Activated CD8-positive, alpha-beta T cell treated with anti-CD3 and anti-CD28 coated beads for 36 hours (primary cell): ENCODE measurements at regions of chr1 and their contacts with region 1.

Region 1: DNA sequence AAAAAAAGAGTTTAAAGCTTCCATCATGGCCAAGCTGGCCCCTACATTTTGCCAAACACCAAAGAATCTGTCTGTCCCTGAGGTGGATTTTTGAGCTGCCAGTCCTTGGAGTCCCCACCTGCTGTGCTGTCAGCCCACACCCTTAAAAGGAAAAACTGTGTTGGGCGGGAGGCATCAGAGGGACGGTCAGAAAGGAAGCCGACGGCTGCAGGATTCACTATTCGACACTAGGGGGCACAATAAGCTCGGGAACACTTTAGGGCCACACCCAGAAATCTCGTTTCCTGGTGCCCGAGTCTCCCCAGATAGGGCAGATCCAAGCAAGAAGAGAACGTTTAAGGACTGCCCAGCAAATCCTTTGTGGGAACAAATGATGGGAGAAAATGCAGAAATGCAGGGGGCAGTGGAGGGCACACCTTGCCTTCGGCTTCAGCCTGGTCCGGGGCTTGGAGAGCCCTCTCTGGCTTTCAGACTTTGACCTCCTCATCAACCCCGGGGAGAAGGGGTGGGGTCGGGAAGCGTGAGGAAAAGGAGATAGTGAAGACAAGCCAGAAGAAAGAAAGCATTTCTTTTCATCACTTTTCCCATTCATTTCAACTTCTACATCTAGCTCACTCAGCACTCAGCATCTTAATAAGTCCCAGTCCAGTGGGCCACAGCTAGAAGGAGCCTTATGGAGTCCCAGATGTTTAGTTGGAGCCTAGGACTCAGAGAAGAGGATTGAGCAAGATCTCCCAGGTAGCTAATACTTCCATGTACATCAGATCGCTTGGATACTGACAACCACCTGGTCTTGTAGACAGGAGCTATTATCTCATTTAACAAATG is 5.0 kb upstream of the CTTNBP2NL start:
- DNase-seq: peak; percentile 88
- ATAC-seq: peak; percentile 91
- H3K4me3 Mint-ChIP-seq: peak overlapping the region; percentile 48
- H3K27ac Mint-ChIP-seq: no peak overlapping the region
- H3K4me1 Mint-ChIP-seq: peaks cover 18% of the 10 kb centered on the region
- H3K27me3 Mint-ChIP-seq: peaks cover 32% of the 10 kb centered on the region
- CTCF ChIP-seq: peak; percentile 86

Region 2: DNA sequence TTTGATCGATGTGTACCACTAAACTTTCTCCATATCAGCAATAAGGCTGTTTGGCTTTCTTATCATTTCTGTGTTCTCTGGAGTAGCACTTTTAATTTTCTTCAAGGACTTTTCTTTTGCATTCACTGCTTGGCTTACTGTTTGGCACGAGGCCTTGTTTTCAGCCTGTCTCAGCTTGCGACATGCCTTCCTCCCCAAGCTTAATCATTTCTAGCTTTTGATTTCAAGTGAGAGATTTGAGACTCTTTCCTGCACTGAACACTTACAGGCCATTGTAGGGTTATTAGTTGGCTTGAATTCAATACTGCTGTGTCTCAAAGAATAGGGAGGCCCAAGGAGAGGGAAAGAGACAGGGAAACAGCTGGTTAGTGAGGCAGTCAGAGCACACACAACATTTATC is 281.0 kb before region 1 on chr1:
- CTCF ChIA-PET with region 1: no interaction called
- POLR2A ChIA-PET with region 1: no interaction called
- intact Hi-C with region 1: no loop called
- DNase-seq: no peak
- ATAC-seq: no peak
- H3K4me3 Mint-ChIP-seq: no peak overlapping the region
- H3K27ac Mint-ChIP-seq: no peak overlapping the region
- H3K4me1 Mint-ChIP-seq: peaks cover 4% of the 10 kb centered on the region
- H3K27me3 Mint-ChIP-seq: peaks cover 13% of the 10 kb centered on the region
- CTCF ChIP-seq: no peak

Region 3: GRCh38 chr1:112466078-112466660 is 75.2 kb after region 1 on chr1:
- CTCF ChIA-PET with region 1: interaction called, 122 read pairs
- POLR2A ChIA-PET with region 1: interaction called, 3 read pairs
- intact Hi-C with region 1: loop called (anchors 2 kb)
- DNase-seq: peak; percentile 92
- ATAC-seq: peak; percentile 98
- H3K4me3 Mint-ChIP-seq: peak overlapping the region; percentile 71
- H3K27ac Mint-ChIP-seq: peak overlapping the region; percentile 32
- H3K4me1 Mint-ChIP-seq: peaks cover 9% of the 10 kb centered on the region
- H3K27me3 Mint-ChIP-seq: peaks cover 35% of the 10 kb centered on the region
- CTCF ChIP-seq: peak; percentile 86

Region 4: GRCh38 chr1:112501810-112502641 is 111.0 kb after region 1 on chr1:
- CTCF ChIA-PET with region 1: interaction called, 11 read pairs
- POLR2A ChIA-PET with region 1: interaction called, 5 read pairs
- intact Hi-C with region 1: no loop called
- DNase-seq: peak; percentile 64
- ATAC-seq: peak; percentile 66
- H3K4me3 Mint-ChIP-seq: peak overlapping the region; percentile 45
- H3K27ac Mint-ChIP-seq: no peak overlapping the region
- H3K4me1 Mint-ChIP-seq: peaks cover 8% of the 10 kb centered on the region
- H3K27me3 Mint-ChIP-seq: peaks cover 50% of the 10 kb centered on the region
- CTCF ChIP-seq: peak; percentile 64

Region 5: DNA sequence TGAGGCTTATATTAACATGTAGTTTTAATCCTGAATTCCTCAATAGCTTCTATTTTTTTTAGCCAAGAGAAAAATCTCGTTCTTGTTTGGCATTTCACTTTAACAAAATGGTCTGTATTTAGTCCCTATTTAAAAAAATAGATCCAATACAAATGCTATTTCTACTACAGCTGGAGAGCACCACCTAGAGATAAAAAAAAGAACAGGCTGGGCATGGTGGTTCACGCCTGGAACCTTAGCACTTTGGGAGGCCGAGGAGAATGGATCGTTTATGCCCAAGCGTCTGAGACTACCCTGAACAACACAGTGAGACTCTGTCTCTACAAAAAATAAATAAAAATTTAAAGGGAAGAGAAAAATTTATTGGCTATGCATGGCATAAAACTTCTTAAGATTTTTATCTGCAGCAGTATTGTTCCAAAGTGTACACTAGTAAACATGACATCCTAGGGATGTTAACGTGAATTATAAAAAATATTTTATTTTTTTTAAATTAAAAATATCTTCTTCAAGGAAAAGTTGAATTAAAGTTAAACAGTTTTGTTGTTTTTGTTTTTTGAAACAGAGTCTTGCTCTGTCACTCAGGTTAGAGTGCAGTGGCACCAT is 223.6 kb after region 1 on chr1:
- CTCF ChIA-PET with region 1: interaction called, 16 read pairs
- POLR2A ChIA-PET with region 1: no interaction called
- intact Hi-C with region 1: no loop called
- DNase-seq: peak; percentile 29
- ATAC-seq: no peak
- H3K4me3 Mint-ChIP-seq: no peak overlapping the region
- H3K27ac Mint-ChIP-seq: no peak overlapping the region
- H3K4me1 Mint-ChIP-seq: peaks cover 7% of the 10 kb centered on the region
- H3K27me3 Mint-ChIP-seq: no peaks in the 10 kb centered on the region
- CTCF ChIP-seq: peak; percentile 73

Region 6: GRCh38 chr1:112706908-112707663 is 316.1 kb after region 1 on chr1 and contains the start of gene RHOC:
- CTCF ChIA-PET with region 1: interaction called, 33 read pairs
- POLR2A ChIA-PET with region 1: interaction called, 3 read pairs
- intact Hi-C with region 1: loop called (anchors 2 kb)
- DNase-seq: peak; percentile 75
- ATAC-seq: peak; percentile 50
- H3K4me3 Mint-ChIP-seq: peak within 1 kb of the TSS; percentile 71
- H3K27ac Mint-ChIP-seq: no peak within 1 kb of the TSS
- H3K4me1 Mint-ChIP-seq: peaks cover 40% of the 10 kb centered on the region
- H3K27me3 Mint-ChIP-seq: peaks cover 13% of the 10 kb centered on the region
- CTCF ChIP-seq: peak; percentile 89
- total RNA-seq, gene RHOC: 34.2 to 34.7 TPM